ENCODE measurements at regions of chr21 and their contacts with region 1.

Region 1: DNA sequence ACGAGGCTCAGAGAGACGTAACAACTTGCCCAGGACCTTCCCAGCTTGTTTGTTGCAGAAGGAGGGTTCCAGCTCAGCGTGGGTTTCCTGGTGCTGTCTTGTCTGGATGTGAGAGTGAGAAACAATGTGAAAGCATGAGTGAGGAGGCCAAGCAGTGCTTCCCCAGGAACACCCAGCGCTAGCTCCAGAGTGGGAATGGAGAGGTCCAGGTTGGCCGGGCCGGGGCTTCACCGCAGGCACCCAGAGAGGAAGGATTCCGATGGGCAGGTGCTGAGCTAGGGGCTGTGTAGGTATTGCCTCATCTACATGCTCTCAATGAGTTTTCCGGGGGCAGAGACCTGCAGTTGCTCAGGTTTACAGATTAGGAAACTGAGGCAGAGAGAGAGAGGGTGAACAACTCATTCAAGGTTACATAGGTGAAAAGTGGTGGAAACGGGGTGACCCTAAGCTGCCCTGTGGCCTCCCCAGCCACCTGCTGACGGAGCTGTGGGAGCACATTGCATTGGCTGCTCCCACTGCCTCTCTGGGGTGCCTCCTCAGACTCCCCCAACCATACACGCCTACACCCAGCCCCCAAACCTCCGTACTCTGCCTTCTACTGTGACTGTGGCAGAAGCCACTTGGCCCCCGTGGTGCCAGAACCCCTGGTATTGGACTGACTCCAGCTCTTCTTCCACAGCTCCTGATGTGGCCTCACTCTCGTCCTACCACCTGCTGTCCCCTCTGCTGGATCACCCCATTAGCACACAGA is 51.2 kb downstream of the B3GALT5 start:
- DNase-seq: no peak

Region 2: GRCh38 chr21:39625211-39625895 is 38.6 kb before region 1 on chr21:
- intact Hi-C with region 1: loop called in 1 of 2 experiments (anchors 2 kb)
- DNase-seq: no peak

Region 3: DNA sequence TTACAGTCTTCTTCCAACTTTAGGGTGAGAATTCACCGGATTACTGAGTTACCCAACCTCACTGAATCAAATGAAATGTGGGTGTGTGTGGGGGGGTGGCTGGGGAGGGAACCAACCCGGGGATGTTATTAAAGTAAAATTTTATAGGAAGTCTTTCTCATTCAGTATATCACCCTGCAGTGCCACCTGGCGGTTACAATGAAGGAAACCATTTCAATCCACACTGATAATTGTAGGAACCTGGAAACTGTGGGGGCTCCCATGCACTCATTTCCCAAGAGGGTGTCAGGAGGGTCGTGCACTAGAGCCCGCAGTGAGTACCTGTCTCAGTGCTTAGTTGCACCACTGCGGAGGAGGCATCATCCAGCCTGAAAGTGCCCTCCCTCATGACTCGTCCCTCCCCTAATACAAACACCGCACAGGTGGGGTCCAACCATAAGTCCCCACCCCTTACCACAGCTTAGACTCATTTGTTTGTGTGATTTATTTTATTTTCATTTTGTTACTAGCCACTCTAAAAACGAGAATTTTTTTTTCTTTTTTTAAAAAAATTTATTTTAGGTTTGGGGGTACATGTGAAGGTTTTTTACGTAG is 52.0 kb after region 1 on chr21:
- intact Hi-C with region 1: no loop called
- DNase-seq: no peak

Region 4: DNA sequence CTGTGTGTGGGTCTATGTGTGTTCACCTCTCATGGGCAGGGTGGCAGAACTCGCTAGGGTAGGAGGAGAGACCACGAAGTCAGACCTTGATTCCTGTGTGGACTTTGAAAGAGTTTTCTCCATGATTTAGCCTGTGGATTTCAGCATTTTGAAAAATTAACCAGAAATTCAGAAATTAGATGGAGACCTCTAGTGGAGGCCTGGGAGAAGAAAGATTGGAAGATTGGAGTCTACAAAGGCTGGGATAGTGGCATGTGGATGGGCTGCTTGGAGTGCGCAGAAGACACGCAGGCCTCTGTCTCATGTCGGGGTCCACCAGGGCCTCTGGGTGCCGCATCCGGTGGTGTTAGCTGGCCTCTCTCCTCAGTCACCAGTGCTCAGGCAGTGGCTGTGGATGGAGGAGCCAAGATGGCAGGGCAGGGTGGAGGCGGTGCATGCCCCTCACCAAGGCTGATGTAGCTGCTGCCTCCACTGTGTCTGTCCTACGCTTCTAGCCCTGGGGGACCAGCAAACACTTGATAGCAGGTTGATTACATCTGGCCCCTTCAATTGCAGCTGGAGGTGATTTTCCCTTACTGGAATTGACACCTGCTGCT is 62.3 kb after region 1 on chr21:
- intact Hi-C with region 1: no loop called
- DNase-seq: no peak

Measured in posterior vena cava (tissue), 2 donors.